GM10248 (cell line): ENCODE measurements at regions of chr19 and their contacts with region 1.

Region 1: DNA sequence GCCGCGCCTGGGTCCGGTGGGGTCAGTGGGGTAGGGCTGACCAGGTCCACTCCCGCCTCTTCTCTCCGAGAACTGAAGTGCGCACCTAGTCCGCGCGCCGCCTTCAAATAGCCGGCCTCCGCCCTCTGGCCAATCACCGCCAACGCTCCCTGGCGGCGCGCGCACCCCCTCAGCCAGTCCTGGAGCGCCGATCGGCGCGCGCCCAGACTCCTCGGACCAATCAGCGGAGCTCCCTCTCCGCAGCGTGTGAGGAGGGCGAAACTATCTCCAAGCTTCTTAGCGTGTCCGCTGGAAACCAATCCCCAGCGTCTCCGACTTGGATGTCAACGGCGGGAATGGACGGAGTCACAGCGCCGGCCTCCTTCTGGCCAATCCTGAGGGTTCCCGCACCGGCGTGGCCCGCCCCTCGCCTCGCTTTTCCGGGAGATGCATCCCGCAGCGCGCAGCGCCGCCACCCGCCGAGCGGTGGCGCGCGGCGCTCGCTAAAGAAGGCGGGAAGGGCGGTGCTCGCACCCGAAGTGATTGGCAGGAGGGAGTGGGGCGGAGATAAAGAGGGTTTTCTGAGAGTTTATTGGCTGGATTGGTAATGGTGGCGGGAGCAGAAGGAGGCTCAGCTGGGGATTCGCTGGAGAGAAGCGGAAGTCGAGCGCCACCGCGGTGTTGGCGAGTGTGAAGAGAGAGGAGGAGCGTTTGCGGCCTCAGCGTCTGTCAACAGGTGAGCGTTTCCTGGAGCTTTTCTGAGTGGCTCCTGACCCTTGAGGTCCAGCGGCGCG is at the start of gene ASF1B:
- DNase-seq: peak; percentile 98
- CTCF ChIP-seq: peak; percentile 90

Region 2: DNA sequence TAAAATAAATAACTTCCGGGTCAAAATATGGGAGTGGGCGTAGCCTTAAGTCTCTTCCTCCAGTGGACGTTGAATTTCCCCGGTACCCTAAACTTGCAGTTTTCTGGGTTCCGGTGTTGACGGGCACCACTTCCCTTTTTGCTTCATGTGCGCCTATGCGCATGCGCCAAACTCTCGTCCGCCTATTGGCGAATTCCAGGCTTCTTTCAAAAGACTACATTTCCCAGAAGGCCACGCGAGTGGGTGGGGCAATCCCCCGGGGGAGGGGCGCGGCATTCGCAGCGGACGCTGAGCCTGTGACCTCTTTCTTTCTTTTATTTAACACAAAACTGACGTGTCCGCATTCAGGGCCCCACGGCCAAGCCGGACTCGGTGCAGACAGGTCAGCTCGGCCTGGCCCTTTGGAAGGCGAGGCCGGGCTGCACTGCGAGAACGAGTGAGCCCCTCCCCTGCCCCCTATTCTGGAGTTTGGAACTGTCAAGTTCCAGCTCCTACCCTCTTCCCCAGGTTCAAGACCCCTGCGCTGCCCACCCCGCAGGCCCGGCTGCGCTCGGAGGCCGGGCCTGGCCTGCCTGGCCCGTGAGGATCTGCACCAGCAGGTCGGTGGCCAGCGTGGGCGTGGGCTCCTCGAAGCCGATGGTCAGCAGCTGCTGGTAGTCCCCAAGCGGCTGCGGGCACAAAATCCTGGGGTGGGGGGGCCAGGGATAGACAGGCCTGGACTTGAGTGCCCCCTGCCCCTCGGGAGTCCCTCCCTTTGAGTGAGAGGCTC is 55.2 kb before region 1 on chr19:
- CTCF ChIA-PET with region 1: interaction called, 16 read pairs
- POLR2A ChIA-PET with region 1: interaction called, 3 read pairs
- DNase-seq: peak; percentile 98
- CTCF ChIP-seq: no peak

Region 3: DNA sequence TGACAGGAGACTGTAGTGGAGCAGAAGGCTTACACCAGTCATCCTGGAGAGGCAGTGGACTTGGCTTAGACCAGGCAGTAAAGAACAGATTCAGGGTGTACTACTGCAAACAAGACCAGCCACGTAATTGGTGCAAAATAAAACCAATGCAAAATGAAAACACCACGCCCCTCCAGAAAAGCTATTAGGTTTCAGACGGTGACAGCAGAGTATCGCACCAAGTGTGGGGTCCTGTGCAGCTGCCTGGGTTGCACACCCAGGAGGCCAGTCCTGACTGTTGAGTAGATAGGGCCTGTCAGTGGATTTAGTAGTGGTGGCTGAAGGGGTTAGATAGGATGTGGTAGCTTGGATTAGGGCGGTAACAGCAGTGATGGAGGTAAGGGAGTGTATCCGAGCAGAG is 13.8 kb before region 1 on chr19:
- CTCF ChIA-PET with region 1: interaction called, 50 read pairs
- POLR2A ChIA-PET with region 1: no interaction called
- DNase-seq: no peak
- CTCF ChIP-seq: no peak

Region 4: GRCh38 chr19:14347999-14348889 is 211.5 kb after region 1 on chr19:
- CTCF ChIA-PET with region 1: interaction called, 19 read pairs
- POLR2A ChIA-PET with region 1: no interaction called
- DNase-seq: peak; percentile 89
- CTCF ChIP-seq: peak; percentile 95

Region 5: DNA sequence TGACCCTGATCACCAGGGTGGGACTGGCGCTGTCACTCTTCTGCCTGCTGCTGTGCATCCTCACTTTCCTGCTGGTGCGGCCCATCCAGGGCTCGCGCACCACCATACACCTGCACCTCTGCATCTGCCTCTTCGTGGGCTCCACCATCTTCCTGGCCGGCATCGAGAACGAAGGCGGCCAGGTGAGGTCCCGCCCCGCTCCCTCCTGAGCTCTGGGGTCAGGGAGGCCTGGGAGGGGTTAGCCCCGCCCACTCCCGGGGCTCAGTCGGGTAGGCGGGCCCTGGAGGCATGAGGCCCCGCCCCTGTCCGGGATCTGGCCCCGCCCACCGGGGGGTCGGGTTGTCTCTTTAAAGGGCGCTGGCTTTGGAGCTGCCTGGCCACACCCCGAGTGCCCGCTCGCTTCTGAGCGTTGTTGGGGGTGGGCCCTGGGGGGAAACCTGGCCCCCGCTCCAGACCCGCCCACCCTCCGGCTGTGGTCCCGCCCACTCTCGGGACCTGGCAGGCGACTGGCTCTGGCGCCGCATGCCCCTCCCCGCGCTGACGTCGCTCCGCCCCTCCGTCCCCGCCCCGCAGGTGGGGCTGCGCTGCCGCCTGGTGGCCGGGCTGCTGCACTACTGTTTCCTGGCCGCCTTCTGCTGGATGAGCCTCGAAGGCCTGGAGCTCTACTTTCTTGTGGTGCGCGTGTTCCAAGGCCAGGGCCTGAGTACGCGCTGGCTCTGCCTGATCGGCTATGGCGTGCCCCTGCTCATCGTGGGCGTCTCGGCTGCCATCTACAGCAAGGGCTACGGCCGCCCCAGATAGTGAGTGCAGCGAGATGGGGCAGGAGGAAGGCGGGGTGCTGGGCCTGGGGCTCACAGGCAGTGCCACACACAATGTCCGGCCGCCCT is 269.3 kb after region 1 on chr19:
- CTCF ChIA-PET with region 1: interaction called, 16 read pairs
- POLR2A ChIA-PET with region 1: interaction called, 4 read pairs
- DNase-seq: peak; percentile 98
- CTCF ChIP-seq: peak; percentile 91